Stomach (tissue), 19 donors: ENCODE measurements at regions of chr9 and their contacts with region 1.

Region 1: DNA sequence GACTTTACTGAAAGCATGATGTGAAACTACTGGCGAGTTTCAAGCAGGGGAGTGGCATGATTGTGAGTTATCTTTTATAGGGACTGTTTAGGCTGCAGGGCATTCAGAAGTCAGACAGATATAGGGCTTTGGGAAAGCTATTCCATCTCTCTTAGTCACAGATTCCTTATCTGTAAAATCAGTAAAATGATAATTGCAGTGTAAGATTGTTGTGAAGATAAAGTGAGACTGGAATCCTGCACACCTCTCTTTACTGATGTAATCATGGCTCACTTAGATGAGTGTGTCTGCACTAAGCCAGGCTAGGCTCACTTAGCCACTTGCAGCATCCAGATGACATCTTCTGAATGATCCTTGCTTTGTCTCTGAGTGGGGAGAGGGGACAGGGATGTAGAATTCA is 81.8 kb upstream of the MAMDC2 start:
- DNase-seq: no peak
- H3K4me3 ChIP-seq: no peak overlapping the region
- H3K27ac ChIP-seq: no peak overlapping the region
- H3K4me1 ChIP-seq: no peaks in the 10 kb centered on the region
- H3K27me3 ChIP-seq: no peaks in the 10 kb centered on the region
- CTCF ChIP-seq: no peak
- EP300 ChIP-seq: no peak
- POLR2A ChIP-seq: no peak

Region 2: DNA sequence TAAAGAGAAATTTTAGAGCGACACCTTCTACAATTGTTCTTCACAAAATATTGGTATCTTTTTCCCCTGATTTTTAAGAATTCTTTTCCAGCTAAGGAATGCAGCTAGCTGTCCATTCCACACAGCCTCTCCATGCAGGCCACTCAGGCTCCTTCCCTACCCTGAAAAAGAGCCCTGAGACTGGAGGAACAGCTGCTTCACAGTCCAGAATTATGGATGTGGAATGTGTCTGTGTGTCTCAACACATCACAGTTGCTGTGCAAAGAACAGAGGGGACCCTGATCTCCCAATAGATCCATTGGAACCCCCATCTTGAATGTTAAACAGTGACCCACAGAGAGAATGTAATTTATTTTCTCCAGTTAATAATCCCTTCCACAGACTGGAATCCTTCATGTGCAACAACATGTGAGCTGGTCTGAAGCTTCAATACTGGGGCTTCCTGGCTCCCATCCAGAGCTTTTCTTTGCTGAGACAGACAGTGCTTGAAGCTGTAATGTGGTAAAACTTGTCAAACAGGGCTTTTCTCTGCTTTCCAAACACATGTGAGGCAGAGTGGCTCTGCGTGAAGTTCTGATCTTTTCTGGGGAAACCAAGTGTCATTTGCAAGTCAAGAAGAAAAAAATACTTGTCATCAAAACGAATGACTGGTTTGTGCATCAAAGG is 243.7 kb after region 1 on chr9:
- intact Hi-C with region 1: no loop called
- DNase-seq: peak in 1 of 2 donors; percentile 56
- H3K4me3 ChIP-seq: no peak overlapping the region
- H3K27ac ChIP-seq: no peak overlapping the region
- H3K4me1 ChIP-seq: no peaks in the 10 kb centered on the region
- H3K27me3 ChIP-seq: no peaks in the 10 kb centered on the region
- CTCF ChIP-seq: no peak
- EP300 ChIP-seq: no peak
- POLR2A ChIP-seq: no peak

Region 3: GRCh38 chr9:70609542-70610286 is 647.9 kb after region 1 on chr9:
- intact Hi-C with region 1: loop called (anchors 10 kb)
- DNase-seq: peak in 1 of 2 donors; percentile 21
- H3K4me3 ChIP-seq: no peak overlapping the region
- H3K27ac ChIP-seq: no peak overlapping the region
- H3K4me1 ChIP-seq: peaks cover 0 to 2% (median 1%) of the 10 kb centered on the region in 4 donors
- H3K27me3 ChIP-seq: no peaks in the 10 kb centered on the region
- CTCF ChIP-seq: no peak
- EP300 ChIP-seq: no peak
- POLR2A ChIP-seq: no peak